ENCODE measurements at regions of chr7 and their contacts with region 1.

Region 1: GRCh38 chr7:636396-636795 is 90.1 kb upstream of the DNAAF5 start:
- DNase-seq: peak in 2 of 3 donors; percentile 48 to 56
- H3K4me3 ChIP-seq: no peak overlapping the region
- H3K27ac ChIP-seq: no peak overlapping the region
- H3K4me1 ChIP-seq: peaks cover 0 to 6% (median 1%) of the 10 kb centered on the region in 4 experiments
- H3K27me3 ChIP-seq: no peaks in the 10 kb centered on the region

Region 2: GRCh38 chr7:332646-333392 is 303.6 kb before region 1 on chr7:
- CTCF ChIA-PET with region 1: interaction called, 44 read pairs
- POLR2A ChIA-PET with region 1: no interaction called
- DNase-seq: peak; percentile 75 to 87 (median 84)
- H3K4me3 ChIP-seq: peak overlapping the region in 3 of 7 experiments; percentile 36 to 62 (median 36)
- H3K27ac ChIP-seq: no peak overlapping the region
- H3K4me1 ChIP-seq: peaks cover 0 to 6% (median 3%) of the 10 kb centered on the region in 4 experiments
- H3K27me3 ChIP-seq: peaks cover 0 to 5% (median 2%) of the 10 kb centered on the region in 5 experiments

Region 3: DNA sequence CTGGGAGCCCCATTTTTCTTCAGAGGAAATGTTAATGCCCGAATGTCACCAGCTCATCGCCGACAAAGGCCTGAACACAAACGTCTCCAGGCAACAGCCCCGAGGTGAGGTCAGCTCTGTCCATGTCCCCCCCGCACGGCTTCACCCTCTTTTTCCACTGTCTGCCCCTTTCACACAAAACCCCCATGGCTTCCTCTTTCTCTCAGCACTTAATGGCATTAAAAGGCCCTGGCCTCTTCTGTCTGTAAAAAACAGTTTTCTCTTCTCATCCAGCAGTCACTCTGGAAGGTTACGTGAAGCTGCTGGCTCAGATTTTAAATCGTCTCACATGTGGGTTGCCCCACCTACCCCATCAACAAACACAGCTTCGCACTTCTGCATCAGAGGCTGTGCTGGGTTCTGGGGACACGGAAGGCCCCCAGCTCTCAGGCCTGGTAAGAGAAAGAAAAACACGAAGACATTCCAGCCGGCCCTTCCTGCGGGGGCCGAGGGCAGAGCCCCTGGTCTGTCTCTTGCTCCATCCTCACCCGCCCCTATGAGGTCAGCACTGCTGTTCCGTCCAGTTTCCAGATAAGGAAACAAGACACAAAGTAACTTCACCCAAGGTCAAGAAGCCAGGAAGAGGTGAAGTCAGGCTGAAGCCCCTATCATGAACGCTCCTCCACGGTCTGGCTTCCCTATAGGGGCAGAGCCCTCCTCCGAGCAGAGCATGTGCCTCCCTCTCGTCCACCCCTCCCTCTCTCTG is 25.7 kb before region 1 on chr7:
- CTCF ChIA-PET with region 1: no interaction called
- POLR2A ChIA-PET with region 1: no interaction called
- DNase-seq: peak in 2 of 3 donors; percentile 71 to 79
- H3K4me3 ChIP-seq: no peak overlapping the region
- H3K27ac ChIP-seq: peak overlapping the region in 1 of 2 experiments; percentile 67
- H3K4me1 ChIP-seq: peaks cover 0 to 55% (median 45%) of the 10 kb centered on the region in 4 experiments
- H3K27me3 ChIP-seq: no peaks in the 10 kb centered on the region

Measured in common myeloid progenitor, CD34-positive (primary cell).